SK-N-SH (cell line): ENCODE measurements at regions of chr17 and their contacts with region 1.

Region 1: DNA sequence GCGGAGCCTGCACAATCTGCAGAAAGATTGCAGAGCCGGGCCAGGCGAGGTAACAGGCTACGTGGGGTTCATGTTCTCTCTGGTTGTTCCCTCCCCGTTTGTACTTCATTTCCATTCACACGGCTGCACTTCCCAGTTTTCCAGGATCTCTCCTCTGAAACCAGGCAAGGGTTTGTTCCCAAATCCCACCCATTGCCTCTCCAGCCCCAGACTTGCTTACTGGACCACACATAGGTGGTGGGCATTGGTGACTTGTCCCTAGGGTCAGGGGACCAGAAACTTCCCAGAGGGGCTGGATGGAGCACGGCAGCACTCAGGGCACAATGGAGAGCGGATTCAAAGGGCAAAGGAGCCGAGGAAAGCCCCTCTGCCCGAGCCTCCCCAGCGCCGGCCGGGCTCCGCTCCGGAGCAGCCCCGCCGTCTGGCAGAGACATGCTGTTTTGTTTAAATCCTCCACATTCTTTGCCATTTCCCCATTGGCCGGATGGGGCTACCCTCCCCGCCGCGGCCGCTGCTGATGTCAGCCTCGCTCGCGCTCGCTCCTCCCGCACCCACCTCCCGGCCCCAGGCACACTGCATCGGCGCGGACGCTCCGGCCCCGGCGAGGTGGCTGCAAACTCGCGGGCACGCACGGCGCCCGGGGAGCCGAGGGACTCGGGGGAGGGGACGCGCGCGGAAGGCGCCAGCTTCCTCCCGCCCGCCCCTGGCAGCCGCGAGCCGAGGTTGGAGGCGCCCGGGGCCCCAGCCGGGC is at the start of gene PITPNC1:
- DNase-seq: peak; percentile 94
- H3K4me3 ChIP-seq: peak within 1 kb of the TSS; percentile 74 to 95
- H3K27ac ChIP-seq: peak within 1 kb of the TSS; percentile 97 to 98
- H3K4me1 ChIP-seq: peaks cover 16 to 21% of the 10 kb centered on the region in 2 experiments; a peak in 3 of 4 replicates
- H3K27me3 ChIP-seq: no peaks in the 10 kb centered on the region
- CTCF ChIP-seq: no peak
- EP300 ChIP-seq: no peak; a peak in 1 of 4 replicates
- RAD21 ChIP-seq: 0 out of 2 replicates have a peak, but pooled peaks have one; percentile 16
- polyA plus RNA-seq, gene PITPNC1: 14.0 and 18.4 TPM in 2 replicates

Region 2: GRCh38 chr17:67353929-67354574 is 22.9 kb before region 1 on chr17:
- CTCF ChIA-PET with region 1: interaction called, 134 read pairs
- POLR2A ChIA-PET with region 1: no interaction called
- DNase-seq: no peak
- H3K4me3 ChIP-seq: no peak overlapping the region
- H3K27ac ChIP-seq: no peak overlapping the region
- H3K4me1 ChIP-seq: peaks cover 0 to 7% of the 10 kb centered on the region in 2 experiments; a peak in 1 of 4 replicates
- H3K27me3 ChIP-seq: no peaks in the 10 kb centered on the region
- CTCF ChIP-seq: no peak
- EP300 ChIP-seq: no peak
- RAD21 ChIP-seq: no peak

Region 3: GRCh38 chr17:67441052-67441927 is 64.4 kb after region 1 on chr17:
- CTCF ChIA-PET with region 1: interaction called, 25 read pairs
- POLR2A ChIA-PET with region 1: no interaction called
- DNase-seq: no peak
- H3K4me3 ChIP-seq: peak overlapping the region in 1 of 2 experiments; percentile 39; a peak in 2 of 4 replicates
- H3K27ac ChIP-seq: peak overlapping the region; percentile 60 to 86
- H3K4me1 ChIP-seq: peaks cover 36 to 55% of the 10 kb centered on the region in 2 experiments
- H3K27me3 ChIP-seq: no peaks in the 10 kb centered on the region
- CTCF ChIP-seq: no peak
- EP300 ChIP-seq: 0 out of 4 replicates have a peak, but pooled peaks of 1 of the 2 experiments have one; percentile 43
- RAD21 ChIP-seq: no peak

Region 4: GRCh38 chr17:67520916-67521774 is 144.2 kb after region 1 on chr17:
- CTCF ChIA-PET with region 1: interaction called, 11 read pairs
- POLR2A ChIA-PET with region 1: no interaction called
- DNase-seq: no peak
- H3K4me3 ChIP-seq: no peak overlapping the region
- H3K27ac ChIP-seq: no peak overlapping the region
- H3K4me1 ChIP-seq: peaks cover 0 to 9% of the 10 kb centered on the region in 2 experiments; a peak in 1 of 4 replicates
- H3K27me3 ChIP-seq: no peaks in the 10 kb centered on the region
- CTCF ChIP-seq: no peak
- EP300 ChIP-seq: no peak
- RAD21 ChIP-seq: no peak

Region 5: GRCh38 chr17:67623767-67624166 is 246.9 kb after region 1 on chr17:
- CTCF ChIA-PET with region 1: interaction called, 95 read pairs
- POLR2A ChIA-PET with region 1: interaction called, 4 read pairs
- DNase-seq: no peak
- H3K4me3 ChIP-seq: no peak overlapping the region
- H3K27ac ChIP-seq: no peak overlapping the region
- H3K4me1 ChIP-seq: peaks cover 0 to 4% of the 10 kb centered on the region in 2 experiments; a peak in 1 of 4 replicates
- H3K27me3 ChIP-seq: no peaks in the 10 kb centered on the region
- CTCF ChIP-seq: no peak
- EP300 ChIP-seq: no peak
- RAD21 ChIP-seq: no peak

Region 6: GRCh38 chr17:67671492-67671891 is 294.6 kb after region 1 on chr17:
- CTCF ChIA-PET with region 1: interaction called, 241 read pairs
- POLR2A ChIA-PET with region 1: no interaction called
- DNase-seq: peak; percentile 59
- H3K4me3 ChIP-seq: no peak overlapping the region
- H3K27ac ChIP-seq: peak overlapping the region in 1 of 2 experiments; percentile 13; a peak in 1 of 4 replicates
- H3K4me1 ChIP-seq: peaks cover 8 to 9% of the 10 kb centered on the region in 2 experiments; a peak in 2 of 4 replicates
- H3K27me3 ChIP-seq: no peaks in the 10 kb centered on the region
- CTCF ChIP-seq: no peak
- EP300 ChIP-seq: no peak
- RAD21 ChIP-seq: no peak

Region 7: DNA sequence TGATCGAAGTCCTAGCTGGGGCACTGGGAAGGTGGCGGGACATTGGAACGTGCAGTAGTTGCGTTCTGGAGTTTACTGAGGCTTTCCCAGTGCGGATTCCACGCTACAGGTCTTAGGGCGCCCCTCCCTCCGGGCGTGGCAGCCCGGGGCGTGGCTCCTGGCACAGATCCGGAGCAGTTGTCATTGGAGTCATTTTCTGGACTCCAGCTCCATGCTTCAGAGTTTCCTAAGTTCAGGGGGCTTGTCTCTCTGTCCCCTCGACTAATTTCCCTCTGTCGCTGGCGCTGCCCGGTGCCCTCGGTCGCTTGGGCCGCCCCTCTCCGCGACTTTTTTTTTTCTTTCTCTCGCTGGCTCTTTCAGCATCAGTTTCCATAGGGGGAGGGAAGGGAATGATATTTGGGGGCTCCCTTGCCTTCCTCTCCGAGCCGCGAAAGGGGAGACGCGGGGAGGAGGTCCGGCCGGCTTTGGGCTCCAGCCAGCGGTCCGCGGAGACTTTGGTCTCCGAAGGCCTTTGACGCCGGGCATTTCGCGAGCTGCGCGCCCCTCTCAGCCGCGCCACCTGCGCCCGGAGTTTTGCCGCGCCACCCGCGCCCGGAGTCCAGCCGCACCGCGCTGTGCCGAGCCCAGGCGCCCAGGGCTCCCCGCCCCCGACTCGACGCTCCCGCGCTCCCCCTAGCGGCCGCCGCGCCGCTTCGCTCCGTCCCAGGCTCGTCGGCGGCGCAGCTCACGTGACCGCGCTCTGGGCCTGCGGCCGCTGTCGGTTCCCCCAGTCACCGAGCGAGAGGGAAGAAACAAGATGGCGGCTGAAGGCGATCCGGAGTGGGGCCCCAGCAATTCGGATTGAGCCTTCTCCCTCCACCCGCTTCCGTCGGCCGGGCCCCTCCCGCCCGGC is 448.1 kb after region 1 on chr17 and contains the start of gene BPTF:
- CTCF ChIA-PET with region 1: interaction called, 10 read pairs
- POLR2A ChIA-PET with region 1: no interaction called
- DNase-seq: peak; percentile 99
- H3K4me3 ChIP-seq: peak within 1 kb of the TSS; percentile 77 to 87
- H3K27ac ChIP-seq: peak within 1 kb of the TSS; percentile 34 to 94; a peak in 3 of 4 replicates
- H3K4me1 ChIP-seq: peaks cover 12 to 20% of the 10 kb centered on the region in 2 experiments; a peak in 3 of 4 replicates
- H3K27me3 ChIP-seq: no peaks in the 10 kb centered on the region
- CTCF ChIP-seq: peak; percentile 93
- EP300 ChIP-seq: peak in 1 of 2 experiments; percentile 47; a peak in 1 of 4 replicates
- RAD21 ChIP-seq: peak; percentile 56
- polyA plus RNA-seq, gene BPTF: 51.9 and 61.4 TPM in 2 replicates